ENCODE measurements at regions of chr12 and their contacts with region 1.

Region 1: GRCh38 chr12:54596526-54596946 is 8.1 kb upstream of the PPP1R1A start:
- DNase-seq: peak in 26 of 35 experiments; percentile 11 to 70 (median 32)
- ATAC-seq: peak in 3 of 4 experiments; percentile 38 to 50 (median 46)
- H3K4me3 ChIP-seq: no peak overlapping the region
- H3K4me3 Mint-ChIP-seq: no peak overlapping the region
- H3K27ac ChIP-seq: no peak overlapping the region
- H3K27ac Mint-ChIP-seq: no peak overlapping the region
- H3K4me1 ChIP-seq: peaks cover 0 to 4% of the 10 kb centered on the region in 2 experiments
- H3K4me1 Mint-ChIP-seq: peaks cover 6 to 11% (median 6%) of the 10 kb centered on the region in 3 donors
- H3K27me3 ChIP-seq: peaks cover 0 to 31% of the 10 kb centered on the region in 2 experiments
- H3K27me3 Mint-ChIP-seq: peaks cover 25% of the 10 kb centered on the region in 2 donors

Region 2: DNA sequence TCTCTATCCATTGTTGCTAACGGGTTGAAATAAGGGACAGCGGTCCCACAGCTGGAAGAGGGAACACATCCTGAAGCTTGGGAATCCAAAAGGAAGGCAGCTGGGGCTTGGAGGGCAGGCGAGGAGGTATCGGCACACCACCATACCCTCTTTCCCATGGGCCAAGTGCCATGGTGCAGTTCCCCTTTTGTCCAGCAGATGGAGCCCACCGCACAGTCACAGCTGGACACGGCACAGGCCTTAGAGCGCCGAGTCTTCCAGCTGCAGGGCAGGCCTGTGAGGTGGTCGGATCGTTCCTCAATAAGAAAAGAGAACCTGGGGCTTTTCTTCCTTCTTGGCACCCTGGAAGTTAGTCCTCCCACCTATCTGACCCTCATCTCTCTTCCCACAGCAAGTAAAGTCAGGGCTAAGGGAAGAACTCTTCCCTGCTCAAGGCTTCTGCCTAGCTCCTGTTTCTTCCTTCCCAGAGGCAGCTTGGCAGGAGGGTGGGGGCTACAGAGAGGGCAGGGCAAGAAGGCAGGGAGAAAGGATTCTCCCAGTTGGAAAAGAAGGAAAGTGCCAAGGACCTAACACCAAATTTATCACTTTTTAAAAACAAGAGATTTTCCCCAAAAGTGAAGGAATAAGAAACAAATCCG is 16.7 kb before region 1 on chr12:
- CTCF ChIA-PET with region 1: interaction called, 4 to 12 read pairs
- POLR2A ChIA-PET with region 1: no interaction called
- DNase-seq: peak; percentile 39 to 85 (median 68)
- ATAC-seq: peak; percentile 90 to 93 (median 92)
- H3K4me3 ChIP-seq: no peak overlapping the region
- H3K4me3 Mint-ChIP-seq: no peak overlapping the region
- H3K27ac ChIP-seq: no peak overlapping the region
- H3K27ac Mint-ChIP-seq: no peak overlapping the region
- H3K4me1 ChIP-seq: peaks cover 0 to 6% of the 10 kb centered on the region in 2 experiments
- H3K4me1 Mint-ChIP-seq: peaks cover 6 to 8% (median 6%) of the 10 kb centered on the region in 3 donors
- H3K27me3 ChIP-seq: peaks cover 0 to 14% of the 10 kb centered on the region in 2 experiments
- H3K27me3 Mint-ChIP-seq: peaks cover 8 to 12% of the 10 kb centered on the region in 2 donors

Region 3: GRCh38 chr12:54689984-54690383 is 93.4 kb after region 1 on chr12:
- CTCF ChIA-PET with region 1: no interaction called
- POLR2A ChIA-PET with region 1: no interaction called
- DNase-seq: no peak
- ATAC-seq: no peak
- H3K4me3 ChIP-seq: no peak overlapping the region
- H3K4me3 Mint-ChIP-seq: no peak overlapping the region
- H3K27ac ChIP-seq: no peak overlapping the region
- H3K27ac Mint-ChIP-seq: no peak overlapping the region
- H3K4me1 ChIP-seq: no peaks in the 10 kb centered on the region
- H3K4me1 Mint-ChIP-seq: no peaks in the 10 kb centered on the region
- H3K27me3 ChIP-seq: peaks cover 0 to 26% of the 10 kb centered on the region in 2 experiments
- H3K27me3 Mint-ChIP-seq: peaks cover 55 to 57% of the 10 kb centered on the region in 2 donors

Region 4: DNA sequence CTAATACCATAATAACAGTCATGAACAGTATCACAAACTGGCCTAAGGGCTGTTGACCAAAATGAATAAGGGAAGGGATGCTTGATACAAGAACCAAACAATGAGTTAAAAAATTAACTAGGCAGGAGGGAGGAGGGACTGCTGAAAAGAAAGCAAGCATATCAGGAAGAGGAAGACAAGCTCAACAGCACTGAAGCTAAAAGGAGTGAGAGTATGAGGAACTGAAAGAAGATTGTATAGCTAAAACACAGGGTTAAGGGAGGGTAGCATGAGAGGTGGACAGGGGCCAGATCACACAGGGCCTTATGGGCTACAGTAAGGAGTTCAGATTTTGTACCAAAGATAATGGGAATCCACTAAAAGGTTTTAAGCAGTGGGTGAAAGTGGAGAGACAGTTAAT is 1077.1 kb after region 1 on chr12:
- CTCF ChIA-PET with region 1: interaction called in 1 of 2 experiments, 11 read pairs
- POLR2A ChIA-PET with region 1: no interaction called
- DNase-seq: no peak
- ATAC-seq: no peak
- H3K4me3 ChIP-seq: no peak overlapping the region
- H3K4me3 Mint-ChIP-seq: no peak overlapping the region
- H3K27ac ChIP-seq: no peak overlapping the region
- H3K27ac Mint-ChIP-seq: peak overlapping the region in 1 of 2 donors; percentile 44
- H3K4me1 ChIP-seq: no peaks in the 10 kb centered on the region
- H3K4me1 Mint-ChIP-seq: peaks cover 0 to 3% (median 0%) of the 10 kb centered on the region in 3 donors
- H3K27me3 ChIP-seq: peaks cover 0 to 5% of the 10 kb centered on the region in 2 experiments
- H3K27me3 Mint-ChIP-seq: peaks cover 12 to 15% of the 10 kb centered on the region in 2 donors

Measured in T-cell (primary cell).